ENCODE measurements at regions of chr16 and their contacts with region 1.

Region 1: DNA sequence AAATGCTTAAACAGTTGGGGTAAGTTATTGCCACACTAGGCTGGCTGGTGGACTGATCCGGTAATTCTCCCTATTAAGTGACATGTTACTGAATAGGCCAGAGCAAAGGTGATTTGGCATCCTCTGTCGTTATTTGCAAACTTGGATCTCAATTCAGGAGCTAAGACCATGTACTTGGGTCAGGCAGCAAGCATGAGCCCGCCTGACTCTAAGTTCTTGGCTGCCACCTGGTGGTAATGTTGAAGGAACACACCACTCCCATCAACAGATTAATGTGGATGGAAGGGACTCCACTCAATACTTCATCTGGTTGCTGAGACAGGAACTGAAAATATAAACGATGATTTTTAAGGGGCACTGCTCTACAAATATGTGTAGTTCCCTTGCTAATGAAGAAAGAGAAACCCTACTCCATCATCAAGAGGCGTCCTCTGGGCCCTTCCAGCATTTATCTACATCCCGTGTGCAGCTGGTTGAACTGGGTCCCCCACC is 70.8 kb downstream of the EMP2 start:
- DNase-seq: peak; percentile 51
- ATAC-seq: peak; percentile 93 to 94

Region 2: DNA sequence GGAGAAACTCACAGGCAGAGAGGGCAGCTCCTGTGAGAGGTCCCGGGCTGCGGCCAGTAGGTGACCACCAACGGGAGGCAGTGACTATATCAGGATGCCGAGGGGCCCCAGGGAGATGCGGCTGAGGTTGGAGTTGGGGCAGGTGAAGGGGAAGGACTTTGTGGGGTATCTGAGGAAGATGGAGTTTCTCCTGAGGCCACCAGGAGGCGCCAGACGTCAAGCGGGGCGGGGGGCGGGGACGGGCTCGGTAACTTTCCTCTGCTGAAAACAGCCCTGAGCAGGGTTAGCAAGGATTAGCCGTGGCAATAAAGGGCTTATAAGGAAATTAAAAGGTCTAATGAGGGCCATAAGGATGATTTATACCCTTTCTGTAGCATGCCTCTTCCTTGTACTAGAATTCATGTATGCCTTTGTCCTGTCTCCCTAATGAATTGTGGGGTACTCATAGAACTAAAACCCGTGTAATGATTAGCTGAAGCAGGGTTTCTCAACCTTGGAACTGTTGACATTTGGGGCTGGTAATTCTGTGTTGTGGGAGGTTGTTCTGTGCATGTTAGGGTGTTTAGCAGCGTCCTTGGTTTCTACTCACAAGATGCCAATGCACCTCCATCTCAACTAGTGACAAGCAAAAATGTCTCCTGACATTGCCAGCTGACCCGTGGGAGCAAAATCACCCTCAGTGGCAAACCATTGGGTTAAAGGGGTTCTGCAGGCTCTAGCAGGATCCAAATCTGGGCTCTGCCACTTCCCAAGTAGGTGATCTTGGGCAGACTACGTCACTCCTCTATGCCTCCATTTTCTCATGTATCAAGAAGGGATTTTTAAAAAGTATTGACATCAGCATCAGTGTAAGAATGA is 252.6 kb before region 1 on chr16:
- intact Hi-C with region 1: loop called in 1 of 2 experiments (anchors 2 kb)
- DNase-seq: peak; percentile 40
- ATAC-seq: peak; percentile 63 to 64

Region 3: GRCh38 chr16:10297341-10298006 is 212.1 kb before region 1 on chr16:
- intact Hi-C with region 1: no loop called
- DNase-seq: no peak
- ATAC-seq: no peak

Region 4: GRCh38 chr16:10314811-10315210 is 194.8 kb before region 1 on chr16:
- intact Hi-C with region 1: loop called (anchors 2 to 5 kb)
- DNase-seq: no peak
- ATAC-seq: peak; percentile 54 to 68

Measured in left cardiac atrium (tissue), 4 donors.